IMR-90 (cell line): ENCODE measurements at regions of chr4 and their contacts with region 1.

Region 1: GRCh38 chr4:152843481-152844090 is 63.8 kb downstream of the ARFIP1 start:
- DNase-seq: no peak
- ATAC-seq: no peak
- H3K4me3 ChIP-seq: no peak overlapping the region
- H3K27ac ChIP-seq: no peak overlapping the region
- H3K4me1 ChIP-seq: no peaks in the 10 kb centered on the region
- H3K27me3 ChIP-seq: no peaks in the 10 kb centered on the region
- CTCF ChIP-seq: no peak
- POLR2A ChIP-seq: no peak
- RAD21 ChIP-seq: no peak

Region 2: DNA sequence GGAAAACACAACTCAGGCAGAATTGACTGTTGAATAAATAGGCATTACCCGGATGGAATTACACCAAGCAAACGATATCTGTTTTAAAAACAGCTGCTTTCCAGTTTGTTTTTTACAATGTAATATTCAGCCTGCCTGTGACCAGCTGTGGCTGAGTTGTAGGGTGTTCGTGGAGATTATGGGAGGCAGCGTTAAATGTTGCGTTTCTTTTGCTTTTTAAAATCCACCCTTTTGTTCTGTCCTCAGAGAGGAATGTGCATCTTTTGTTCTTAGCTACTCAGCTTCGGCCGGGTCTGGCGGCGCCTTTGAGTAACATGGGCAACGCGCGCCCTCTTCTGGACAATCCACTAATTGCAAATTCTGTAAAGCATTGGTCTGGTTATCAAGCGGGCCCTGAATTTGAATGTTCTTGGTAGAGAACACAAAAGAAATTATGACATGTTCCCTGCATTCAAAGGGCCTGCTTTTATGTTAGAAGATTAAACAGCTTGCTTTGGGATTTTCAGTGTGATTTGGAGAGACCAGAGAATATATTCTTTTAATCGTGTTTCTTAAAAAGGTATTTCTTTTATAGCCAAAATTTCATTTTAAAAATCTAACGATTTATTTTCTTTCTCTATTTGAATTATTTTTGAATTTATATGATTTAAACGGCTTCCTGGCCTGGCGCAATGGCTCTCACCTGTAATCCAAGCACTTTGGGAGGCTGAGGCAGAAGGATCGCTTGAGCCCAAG is 284.3 kb after region 1 on chr4:
- CTCF ChIA-PET with region 1: interaction called, 10 read pairs
- POLR2A ChIA-PET with region 1: no interaction called
- dilution Hi-C with region 1: no loop called
- in situ Hi-C with region 1: loop called (anchors 10 kb)
- intact Hi-C with region 1: loop called (anchors 1 kb)
- DNase-seq: peak; percentile 77
- ATAC-seq: peak; percentile 95
- H3K4me3 ChIP-seq: no peak overlapping the region
- H3K27ac ChIP-seq: no peak overlapping the region
- H3K4me1 ChIP-seq: no peaks in the 10 kb centered on the region
- H3K27me3 ChIP-seq: no peaks in the 10 kb centered on the region
- CTCF ChIP-seq: peak; percentile 94
- POLR2A ChIP-seq: no peak
- RAD21 ChIP-seq: peak; percentile 91

Region 3: DNA sequence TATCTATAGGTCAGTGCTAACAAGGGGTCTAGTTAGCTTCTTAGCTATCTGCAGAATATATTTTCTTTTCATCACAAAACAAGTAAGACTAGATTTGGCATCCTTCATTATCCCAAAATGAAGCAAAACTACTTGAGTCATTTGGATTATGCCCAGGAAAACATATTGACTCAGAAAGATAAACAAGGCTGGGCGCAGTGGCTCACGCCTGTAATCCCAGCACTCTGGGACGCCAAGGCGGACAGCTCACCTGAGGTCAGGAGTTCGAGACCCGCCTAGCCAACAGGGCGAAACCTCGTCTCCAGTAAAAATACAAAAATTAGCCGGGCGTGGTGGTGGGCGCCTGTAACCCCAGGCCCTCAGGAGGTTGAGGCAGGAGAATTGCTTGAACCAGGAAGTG is 482.9 kb after region 1 on chr4:
- CTCF ChIA-PET with region 1: no interaction called
- POLR2A ChIA-PET with region 1: no interaction called
- dilution Hi-C with region 1: no loop called
- in situ Hi-C with region 1: no loop called
- intact Hi-C with region 1: loop called (anchors 10 kb)
- DNase-seq: peak; percentile 17
- ATAC-seq: no peak
- H3K4me3 ChIP-seq: no peak overlapping the region
- H3K27ac ChIP-seq: no peak overlapping the region
- H3K4me1 ChIP-seq: no peaks in the 10 kb centered on the region
- H3K27me3 ChIP-seq: no peaks in the 10 kb centered on the region
- CTCF ChIP-seq: no peak
- POLR2A ChIP-seq: no peak
- RAD21 ChIP-seq: no peak

Region 4: DNA sequence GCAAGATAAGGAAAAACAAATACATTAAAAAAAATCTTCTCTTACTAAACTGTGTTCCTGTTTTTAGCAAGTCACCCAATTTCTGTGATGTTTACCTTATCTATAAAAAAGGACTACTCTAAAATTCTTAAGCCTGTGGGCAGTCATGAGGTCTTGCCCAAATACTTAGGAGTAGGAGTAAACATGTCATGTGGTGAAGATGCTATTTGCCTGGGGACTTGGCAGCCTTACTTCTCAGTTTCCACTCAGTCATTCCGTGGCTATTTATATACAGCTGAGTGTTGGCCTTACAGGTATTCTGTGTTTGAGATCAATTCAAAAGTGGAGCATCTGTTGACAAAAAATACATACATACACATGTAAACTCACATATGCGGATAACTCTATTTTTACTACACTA is 750.6 kb after region 1 on chr4:
- CTCF ChIA-PET with region 1: no interaction called
- POLR2A ChIA-PET with region 1: no interaction called
- dilution Hi-C with region 1: no loop called
- in situ Hi-C with region 1: loop called (anchors 25 kb)
- intact Hi-C with region 1: no loop called
- DNase-seq: peak; percentile 41
- ATAC-seq: peak; percentile 64
- H3K4me3 ChIP-seq: no peak overlapping the region
- H3K27ac ChIP-seq: no peak overlapping the region
- H3K4me1 ChIP-seq: no peaks in the 10 kb centered on the region
- H3K27me3 ChIP-seq: no peaks in the 10 kb centered on the region
- CTCF ChIP-seq: no peak
- POLR2A ChIP-seq: no peak
- RAD21 ChIP-seq: no peak